Right ventricle myocardium inferior (tissue), 1 donor: ENCODE measurements at regions of chr15 and their contacts with region 1.

Region 1: DNA sequence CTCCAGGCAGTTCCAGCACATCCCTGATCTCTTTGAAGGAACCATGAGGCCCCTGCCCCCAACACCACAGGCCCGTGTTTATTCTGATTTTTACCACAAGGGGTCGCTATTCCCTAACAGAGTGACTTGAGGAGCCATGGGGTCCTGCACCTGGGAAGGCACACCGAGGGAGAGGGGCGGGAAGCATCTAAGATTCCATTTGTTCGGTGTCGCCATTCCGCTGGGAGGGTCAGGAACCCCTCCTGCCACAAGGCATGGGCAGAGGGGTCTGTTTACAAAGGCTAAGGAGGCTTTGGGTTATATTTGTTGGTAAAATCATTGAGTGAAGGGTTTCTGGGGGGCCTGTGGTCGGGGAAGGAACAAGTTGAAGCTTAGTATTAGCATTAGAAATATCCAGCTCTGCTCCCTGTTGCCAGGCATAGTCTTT is 77.1 kb downstream of the WDR76 start:
- DNase-seq: no peak
- ATAC-seq: peak; percentile 67

Region 2: GRCh38 chr15:43791993-43792760 is 111.7 kb before region 1 on chr15 and contains the start of gene SERF2:
- intact Hi-C with region 1: no loop called
- DNase-seq: peak; percentile 100
- ATAC-seq: peak; percentile 97
- total RNA-seq, gene SERF2: 1,102 TPM

Region 3: GRCh38 chr15:44066316-44066740 is 162.5 kb after region 1 on chr15:
- intact Hi-C with region 1: loop called (anchors 1 kb)
- DNase-seq: no peak
- ATAC-seq: no peak

Region 4: DNA sequence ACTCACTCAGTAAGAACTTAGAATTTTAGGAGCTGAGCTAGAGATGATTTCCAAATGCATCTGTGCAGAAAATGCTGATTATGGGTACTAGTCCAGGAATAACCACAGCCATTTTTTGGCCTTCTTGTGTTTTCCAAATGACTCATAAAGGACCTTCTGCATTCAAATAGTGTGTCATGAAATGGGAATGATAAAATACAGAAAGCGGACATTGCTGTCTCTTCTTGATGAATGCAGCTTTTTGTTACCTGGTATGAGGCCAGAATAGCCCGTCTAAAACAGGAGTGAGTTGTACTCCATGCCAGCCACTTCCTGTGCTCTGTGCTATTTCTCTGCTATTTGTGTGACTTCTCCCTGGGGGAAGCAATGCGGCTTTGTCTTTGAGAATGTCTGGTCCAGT is 311.7 kb after region 1 on chr15:
- intact Hi-C with region 1: loop called (anchors 5 kb)
- DNase-seq: no peak
- ATAC-seq: no peak

Region 5: DNA sequence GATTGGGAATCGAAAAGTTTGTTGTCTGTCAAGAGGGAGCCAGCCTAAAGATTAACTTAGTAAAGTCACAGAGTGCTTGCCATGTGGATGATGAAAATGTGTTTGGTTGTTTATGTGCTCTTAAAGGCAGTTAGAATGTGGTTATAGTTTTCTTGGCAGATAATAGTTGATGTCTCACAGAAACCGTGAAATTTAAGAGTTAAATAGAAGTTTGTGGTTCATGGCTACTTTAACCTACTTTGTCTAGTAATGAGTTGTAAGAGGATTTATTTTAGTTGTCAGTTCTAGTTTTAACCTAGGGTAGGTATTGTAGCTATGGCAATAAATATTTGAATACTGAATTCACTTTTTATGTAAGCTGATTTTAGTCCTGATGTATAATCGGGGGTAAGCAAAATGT is 596.7 kb after region 1 on chr15:
- intact Hi-C with region 1: no loop called
- DNase-seq: no peak
- ATAC-seq: no peak

Region 6: GRCh38 chr15:44918136-44918535 is 1014.3 kb after region 1 on chr15:
- intact Hi-C with region 1: no loop called
- DNase-seq: no peak
- ATAC-seq: no peak